ENCODE measurements at regions of chr14 and their contacts with region 1.

Region 1: DNA sequence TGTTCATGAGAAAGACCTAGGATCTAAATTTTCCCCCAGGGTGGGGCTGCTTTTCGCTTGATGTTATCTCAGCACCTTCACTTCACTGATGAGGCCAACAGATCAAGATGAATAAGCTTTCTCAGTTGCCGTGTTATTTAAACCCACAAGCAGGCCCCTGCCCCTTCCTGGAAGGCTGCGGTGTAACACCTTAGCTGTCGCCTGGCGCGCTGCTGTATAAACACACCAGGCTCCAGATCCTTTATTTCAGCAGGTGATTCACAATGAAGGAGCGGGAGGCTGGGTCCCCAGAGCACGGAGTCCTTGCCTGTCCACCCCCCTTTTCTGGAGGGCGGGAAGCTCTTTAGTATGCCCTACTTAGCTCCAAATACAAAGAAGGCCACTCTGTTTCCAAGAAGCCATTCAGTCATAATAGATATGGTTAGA is 515.4 kb downstream of the FUT8 start:
- DNase-seq: peak; percentile 48 to 89 (median 72)
- ATAC-seq: peak; percentile 96
- H3K4me3 ChIP-seq: peak overlapping the region; percentile 9
- H3K4me3 Mint-ChIP-seq: peak overlapping the region; percentile 77
- H3K27ac ChIP-seq: peak overlapping the region in 1 of 2 donors; percentile 35
- H3K27ac Mint-ChIP-seq: peak overlapping the region; percentile 90
- H3K4me1 ChIP-seq: peaks cover 58% of the 10 kb centered on the region
- H3K4me1 Mint-ChIP-seq: peaks cover 58% of the 10 kb centered on the region
- H3K27me3 ChIP-seq: no peaks in the 10 kb centered on the region
- H3K27me3 Mint-ChIP-seq: no peaks in the 10 kb centered on the region
- CTCF ChIP-seq: peak; percentile 16

Region 2: GRCh38 chr14:65810322-65810721 is 117.6 kb before region 1 on chr14:
- CTCF ChIA-PET with region 1: no interaction called
- POLR2A ChIA-PET with region 1: no interaction called
- intact Hi-C with region 1: loop called in 1 of 2 experiments (anchors 5 kb)
- DNase-seq: no peak
- ATAC-seq: no peak
- H3K4me3 ChIP-seq: no peak overlapping the region
- H3K4me3 Mint-ChIP-seq: no peak overlapping the region
- H3K27ac ChIP-seq: no peak overlapping the region
- H3K27ac Mint-ChIP-seq: no peak overlapping the region
- H3K4me1 ChIP-seq: no peaks in the 10 kb centered on the region
- H3K4me1 Mint-ChIP-seq: peaks cover 5% of the 10 kb centered on the region
- H3K27me3 ChIP-seq: no peaks in the 10 kb centered on the region
- H3K27me3 Mint-ChIP-seq: no peaks in the 10 kb centered on the region
- CTCF ChIP-seq: no peak

Region 3: GRCh38 chr14:65860956-65861611 is 66.9 kb before region 1 on chr14:
- CTCF ChIA-PET with region 1: no interaction called
- POLR2A ChIA-PET with region 1: interaction called, 13 read pairs
- intact Hi-C with region 1: no loop called
- DNase-seq: peak in 8 of 14 experiments; percentile 16 to 74 (median 31)
- ATAC-seq: peak; percentile 70
- H3K4me3 ChIP-seq: no peak overlapping the region
- H3K4me3 Mint-ChIP-seq: peak overlapping the region; percentile 40
- H3K27ac ChIP-seq: no peak overlapping the region
- H3K27ac Mint-ChIP-seq: peak overlapping the region; percentile 36
- H3K4me1 ChIP-seq: peaks cover 51% of the 10 kb centered on the region
- H3K4me1 Mint-ChIP-seq: peaks cover 66% of the 10 kb centered on the region
- H3K27me3 ChIP-seq: no peaks in the 10 kb centered on the region
- H3K27me3 Mint-ChIP-seq: no peaks in the 10 kb centered on the region
- CTCF ChIP-seq: no peak

Region 4: DNA sequence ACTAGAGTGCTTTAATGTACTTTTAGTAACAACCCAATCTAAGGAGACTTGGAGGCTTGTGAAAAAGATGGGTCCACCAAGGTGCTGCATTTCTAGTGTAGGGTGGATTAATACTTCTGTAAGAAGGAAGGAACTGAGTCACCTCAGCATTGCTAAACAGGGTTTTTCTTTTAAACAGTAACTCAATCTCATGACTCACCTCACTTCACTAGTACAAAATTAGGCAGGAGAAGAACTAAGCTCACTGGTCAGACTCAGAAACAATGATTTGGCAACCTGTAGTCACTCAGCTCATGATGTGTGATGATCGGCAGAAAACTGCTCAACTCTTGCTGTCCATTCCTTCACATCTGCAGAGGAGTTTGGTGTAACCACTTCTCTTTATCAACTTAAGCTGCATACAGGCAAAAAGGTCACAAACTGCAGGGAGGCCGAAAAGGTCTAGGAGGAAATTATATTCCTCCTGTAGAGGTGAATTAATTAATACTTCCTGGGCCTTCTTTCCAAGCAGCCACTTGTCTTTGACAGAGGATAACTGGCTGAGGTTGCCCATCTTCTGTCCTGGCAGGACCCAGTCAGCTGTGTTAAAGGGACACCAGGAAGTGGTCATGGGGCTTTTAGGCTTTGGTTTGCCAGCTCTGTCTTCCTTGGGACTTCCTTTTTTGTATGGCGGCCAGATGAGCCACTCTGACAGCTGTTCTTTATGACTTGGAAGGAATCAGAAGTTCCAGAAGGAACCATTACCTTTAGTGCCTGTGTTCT is 48.5 kb before region 1 on chr14:
- CTCF ChIA-PET with region 1: no interaction called
- POLR2A ChIA-PET with region 1: interaction called, 11 read pairs
- intact Hi-C with region 1: no loop called
- DNase-seq: no peak
- ATAC-seq: no peak
- H3K4me3 ChIP-seq: no peak overlapping the region
- H3K4me3 Mint-ChIP-seq: no peak overlapping the region
- H3K27ac ChIP-seq: no peak overlapping the region
- H3K27ac Mint-ChIP-seq: peak overlapping the region; percentile 8
- H3K4me1 ChIP-seq: peaks cover 17% of the 10 kb centered on the region
- H3K4me1 Mint-ChIP-seq: peaks cover 26% of the 10 kb centered on the region
- H3K27me3 ChIP-seq: no peaks in the 10 kb centered on the region
- H3K27me3 Mint-ChIP-seq: no peaks in the 10 kb centered on the region
- CTCF ChIP-seq: no peak

Region 5: DNA sequence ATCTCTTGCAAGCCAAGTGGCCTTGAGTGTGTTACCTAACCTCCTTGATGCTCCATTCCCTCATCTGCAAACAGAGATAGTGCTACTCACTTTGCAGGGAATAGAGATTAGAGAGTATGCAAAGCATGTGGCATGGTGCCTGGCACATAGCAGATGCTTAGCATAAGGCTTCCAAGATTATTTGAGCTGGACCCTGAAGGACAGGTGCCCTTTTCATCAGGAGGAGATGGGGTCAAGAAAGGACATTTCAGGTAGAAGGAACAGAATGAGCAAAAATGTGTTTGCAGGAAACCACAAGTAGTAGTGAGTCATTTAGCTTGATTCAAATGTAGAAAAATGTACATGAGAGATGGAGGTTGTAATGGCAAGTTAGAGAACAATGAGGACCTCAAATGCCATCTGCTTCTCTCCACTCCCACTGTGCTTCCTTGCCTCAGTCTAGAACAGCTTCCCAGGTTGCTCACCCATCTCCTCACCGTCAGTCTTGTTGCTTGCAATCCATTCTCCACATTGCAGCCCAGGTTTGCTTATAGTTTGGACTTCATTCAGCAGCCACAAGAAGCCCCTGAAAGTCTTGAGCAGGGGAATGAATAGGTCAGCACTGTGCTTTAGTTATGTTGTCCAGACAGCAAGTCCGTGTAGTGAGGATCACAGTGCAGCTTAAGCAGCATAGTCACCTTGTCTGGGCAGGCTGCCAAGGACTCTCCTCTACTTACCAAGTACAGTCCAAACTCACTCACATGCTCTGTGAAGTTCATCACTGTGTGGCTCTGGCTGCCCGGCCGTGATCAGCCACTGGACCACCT is 22.0 kb after region 1 on chr14:
- CTCF ChIA-PET with region 1: no interaction called
- POLR2A ChIA-PET with region 1: interaction called, 13 read pairs
- intact Hi-C with region 1: no loop called
- DNase-seq: peak in 6 of 14 experiments; percentile 12 to 56 (median 31)
- ATAC-seq: no peak
- H3K4me3 ChIP-seq: no peak overlapping the region
- H3K4me3 Mint-ChIP-seq: no peak overlapping the region
- H3K27ac ChIP-seq: no peak overlapping the region
- H3K27ac Mint-ChIP-seq: no peak overlapping the region
- H3K4me1 ChIP-seq: peaks cover 25% of the 10 kb centered on the region
- H3K4me1 Mint-ChIP-seq: peaks cover 32% of the 10 kb centered on the region
- H3K27me3 ChIP-seq: no peaks in the 10 kb centered on the region
- H3K27me3 Mint-ChIP-seq: no peaks in the 10 kb centered on the region
- CTCF ChIP-seq: no peak